ENCODE measurements at regions of chr14 and their contacts with region 1.

Region 1: GRCh38 chr14:71855399-71856036 is 76.7 kb upstream of the RGS6 start:
- DNase-seq: peak; percentile 56
- H3K4me3 ChIP-seq: no peak overlapping the region
- H3K27ac ChIP-seq: no peak overlapping the region
- H3K4me1 ChIP-seq: no peaks in the 10 kb centered on the region
- H3K27me3 ChIP-seq: no peaks in the 10 kb centered on the region
- CTCF ChIP-seq: peak; percentile 75 to 86

Region 2: GRCh38 chr14:71050204-71050823 is 805.2 kb before region 1 on chr14:
- CTCF ChIA-PET with region 1: interaction called, 3 read pairs
- dilution Hi-C with region 1: no loop called
- in situ Hi-C with region 1: no loop called
- intact Hi-C with region 1: loop called (anchors 5 kb)
- DNase-seq: no peak
- H3K4me3 ChIP-seq: no peak overlapping the region
- H3K27ac ChIP-seq: no peak overlapping the region
- H3K4me1 ChIP-seq: no peaks in the 10 kb centered on the region
- H3K27me3 ChIP-seq: no peaks in the 10 kb centered on the region
- CTCF ChIP-seq: peak; percentile 39 to 48

Region 3: GRCh38 chr14:71720978-71721624 is 134.4 kb before region 1 on chr14:
- CTCF ChIA-PET with region 1: no interaction called
- dilution Hi-C with region 1: no loop called
- in situ Hi-C with region 1: no loop called
- intact Hi-C with region 1: loop called (anchors 1 kb)
- DNase-seq: peak; percentile 86
- H3K4me3 ChIP-seq: no peak overlapping the region
- H3K27ac ChIP-seq: no peak overlapping the region
- H3K4me1 ChIP-seq: peaks cover 19% of the 10 kb centered on the region
- H3K27me3 ChIP-seq: no peaks in the 10 kb centered on the region
- CTCF ChIP-seq: peak; percentile 48 to 79

Region 4: DNA sequence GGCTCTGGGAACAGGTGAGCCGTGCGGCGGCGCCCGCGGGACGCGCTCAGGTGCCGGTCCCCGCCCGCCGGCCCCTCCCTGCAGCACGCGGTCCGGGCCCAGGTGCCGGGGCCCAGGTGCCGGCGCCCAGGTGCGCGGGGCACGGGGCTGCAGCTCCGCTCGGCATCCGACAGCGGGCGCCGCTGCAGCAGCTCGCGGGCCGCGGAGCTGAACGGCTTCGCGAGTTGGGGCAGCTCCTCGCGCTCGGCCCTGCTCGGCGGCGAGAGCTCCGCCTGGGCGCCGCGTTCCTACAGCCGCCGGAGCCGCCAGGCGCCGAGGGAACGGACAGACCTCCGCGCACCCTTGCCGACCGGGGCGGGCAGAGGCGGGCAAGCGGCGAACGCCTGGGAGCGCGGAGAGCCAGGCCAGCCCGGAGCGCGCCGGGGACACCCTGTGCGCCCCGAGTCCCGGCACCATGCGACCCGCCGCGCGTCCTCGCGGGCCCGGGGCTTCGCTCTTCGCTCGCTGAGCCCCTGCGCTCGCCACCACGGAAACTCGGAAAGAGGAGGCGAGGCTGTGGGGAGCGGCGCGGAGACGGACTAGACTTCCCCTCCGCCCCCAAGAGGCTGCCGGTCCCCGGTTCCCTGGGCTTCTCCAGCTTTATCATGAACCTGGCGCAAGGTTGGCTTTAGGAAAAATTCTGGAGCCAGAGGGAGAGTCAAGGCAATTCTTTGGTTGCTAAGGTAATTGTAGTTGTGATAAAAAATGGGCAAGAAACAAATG is 76.9 kb after region 1 on chr14 and contains the start of gene RGS6:
- CTCF ChIA-PET with region 1: no interaction called
- dilution Hi-C with region 1: no loop called
- in situ Hi-C with region 1: no loop called
- intact Hi-C with region 1: loop called (anchors 2 kb)
- DNase-seq: peak; percentile 70
- H3K4me3 ChIP-seq: peak within 1 kb of the TSS; percentile 11 to 20 (median 11)
- H3K27ac ChIP-seq: no peak within 1 kb of the TSS
- H3K4me1 ChIP-seq: no peaks in the 10 kb centered on the region
- H3K27me3 ChIP-seq: peaks cover 22% of the 10 kb centered on the region
- CTCF ChIP-seq: peak in 1 of 2 donors; percentile 39
- total RNA-seq, gene RGS6: not detected

Measured in mammary epithelial cell (primary cell).